WTC11 (cell line): ENCODE measurements at regions of chr2 and their contacts with region 1.

Region 1: DNA sequence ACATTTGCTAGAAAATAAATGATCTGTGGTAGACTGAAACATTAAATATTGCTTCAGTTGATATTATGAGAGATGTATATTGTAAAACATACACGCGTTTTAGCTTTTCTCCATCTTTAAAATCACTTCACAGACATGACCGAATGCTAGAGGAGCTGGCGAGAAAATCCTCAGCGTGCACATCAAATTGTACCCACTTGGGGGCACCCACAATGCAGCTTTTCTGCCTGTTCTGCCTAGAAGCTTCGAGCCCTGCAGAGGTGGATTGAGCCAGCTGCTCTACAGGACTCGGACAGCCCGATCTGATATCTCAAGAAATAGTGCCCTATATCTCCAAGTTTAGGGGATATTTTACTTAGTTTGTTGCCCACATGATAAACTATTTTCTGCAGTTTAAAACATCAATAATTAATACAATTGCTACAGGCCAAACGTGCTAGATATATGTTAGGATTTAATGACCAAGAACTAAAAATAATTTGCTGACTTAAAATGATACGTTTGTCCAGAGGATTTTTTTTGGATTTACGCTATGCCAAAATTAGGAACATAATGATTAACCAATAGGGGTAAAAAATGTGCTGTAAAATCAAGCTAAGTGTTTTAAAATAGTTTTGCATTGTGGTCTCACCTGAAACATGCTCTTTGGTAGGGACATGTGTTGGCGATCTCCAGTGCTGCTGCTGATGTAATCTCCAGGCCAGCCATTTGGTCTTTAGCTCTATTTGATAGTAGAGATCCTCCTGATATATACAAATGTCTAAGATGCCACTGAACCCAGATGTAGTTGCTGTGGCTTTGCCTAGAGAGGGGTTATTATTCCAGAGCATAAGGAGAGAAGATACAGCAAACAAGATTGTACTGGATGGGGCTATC is 22.3 kb upstream of the ATP5MC3 start:
- DNase-seq: peak; percentile 76
- ATAC-seq: peak; percentile 100
- H3K4me3 Mint-ChIP-seq: no peak overlapping the region
- H3K27ac Mint-ChIP-seq: no peak overlapping the region
- H3K4me1 Mint-ChIP-seq: peaks cover 3% of the 10 kb centered on the region; the same call in 1 of the 2 replicates
- H3K27me3 Mint-ChIP-seq: no peaks in the 10 kb centered on the region; the same call in 1 of the 2 replicates
- CTCF ChIP-seq: no peak

Region 2: DNA sequence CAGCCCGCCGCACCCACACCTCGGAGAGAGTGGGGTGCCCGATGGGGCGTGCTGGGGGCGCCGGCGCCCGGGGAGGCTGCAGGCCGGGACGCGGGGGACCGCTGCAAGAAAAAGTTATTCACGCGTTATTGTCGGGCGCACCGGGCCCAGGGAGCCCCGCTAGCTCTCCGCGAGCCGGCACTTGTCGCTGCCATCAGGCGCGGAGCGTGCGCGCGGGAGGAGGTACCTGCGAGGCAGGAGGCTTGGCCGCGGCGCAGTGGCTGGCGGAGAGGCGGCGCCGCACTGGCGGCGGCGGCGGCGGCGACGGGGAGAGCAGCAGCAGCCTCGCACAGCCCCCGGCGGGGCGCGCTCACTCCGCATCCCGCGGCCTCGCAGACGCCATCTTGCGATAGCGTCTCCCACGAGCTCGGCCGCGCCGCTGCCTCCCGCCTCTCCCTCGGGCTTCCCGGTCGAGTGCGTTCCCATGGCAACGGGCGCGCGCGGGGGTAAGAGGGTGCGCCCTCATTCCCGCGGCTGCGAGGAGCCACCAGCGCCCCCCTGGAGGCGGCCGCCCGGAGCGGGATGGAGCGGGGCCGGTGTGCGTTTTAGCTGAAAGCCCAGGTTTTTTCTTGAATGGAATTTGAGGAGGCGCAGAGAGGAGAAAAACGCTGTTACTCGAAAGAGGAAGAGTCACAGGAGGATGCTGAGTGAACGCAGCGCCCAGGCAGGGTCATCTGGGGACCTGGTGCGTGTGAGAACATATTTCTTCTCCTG is 198.7 kb before region 1 on chr2 and contains the start of gene CHN1:
- CTCF ChIA-PET with region 1: no interaction called
- POLR2A ChIA-PET with region 1: no interaction called
- DNase-seq: peak; percentile 81
- ATAC-seq: peak; percentile 79
- H3K4me3 Mint-ChIP-seq: peak within 1 kb of the TSS; percentile 89
- H3K27ac Mint-ChIP-seq: peak within 1 kb of the TSS; percentile 91
- H3K4me1 Mint-ChIP-seq: peaks cover 51% of the 10 kb centered on the region
- H3K27me3 Mint-ChIP-seq: no peaks in the 10 kb centered on the region
- CTCF ChIP-seq: no peak
- total RNA-seq, gene CHN1: 26.1 to 30.0 TPM (median 28.0 TPM) in 3 replicates

Region 3: DNA sequence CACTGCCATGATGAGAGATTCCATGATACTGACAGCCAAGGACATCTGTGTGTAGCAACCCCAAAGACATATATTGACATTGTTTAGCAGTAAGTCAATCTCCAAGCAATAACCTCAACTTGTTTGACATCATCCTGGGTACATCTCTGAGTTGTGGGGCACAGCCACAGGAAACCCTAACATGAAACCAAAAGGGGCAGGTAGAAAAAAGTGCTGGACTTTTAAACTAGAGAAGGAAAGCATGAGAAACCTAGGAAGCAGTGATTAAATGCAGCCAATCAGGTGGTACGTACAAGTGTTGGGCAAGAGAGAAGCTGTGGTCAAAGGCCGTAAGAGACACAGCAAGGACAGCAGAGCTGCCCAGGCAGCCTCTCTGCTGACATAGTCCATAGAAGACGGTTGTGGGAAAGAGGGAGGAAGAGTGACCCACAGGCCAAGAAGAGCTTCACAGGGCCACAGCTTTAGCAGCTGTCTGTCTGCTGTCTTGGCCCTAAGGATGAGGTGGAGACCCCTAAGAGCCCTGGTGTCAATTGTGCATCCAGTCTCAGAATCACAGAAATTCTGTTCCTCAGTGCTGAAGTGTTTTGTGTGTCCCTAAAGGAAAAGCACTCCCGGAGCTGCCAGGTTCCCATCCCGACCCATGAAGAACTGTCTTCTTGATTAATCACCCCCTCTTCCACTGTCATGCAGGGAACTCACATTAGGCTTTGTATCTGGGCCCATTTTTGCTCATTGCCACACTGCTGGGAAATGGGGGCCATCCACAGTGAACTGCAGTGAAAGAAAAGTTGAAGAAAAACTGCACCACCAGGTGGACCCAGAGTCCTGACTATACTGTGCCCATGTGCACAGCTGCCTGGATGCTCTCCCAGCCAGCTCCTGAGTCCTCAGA is 173.2 kb before region 1 on chr2:
- CTCF ChIA-PET with region 1: interaction called, 11 read pairs
- POLR2A ChIA-PET with region 1: no interaction called
- DNase-seq: peak; percentile 61
- ATAC-seq: peak; percentile 99
- H3K4me3 Mint-ChIP-seq: no peak overlapping the region
- H3K27ac Mint-ChIP-seq: no peak overlapping the region
- H3K4me1 Mint-ChIP-seq: peaks cover 13% of the 10 kb centered on the region
- H3K27me3 Mint-ChIP-seq: no peaks in the 10 kb centered on the region
- CTCF ChIP-seq: 0 out of 2 replicates have a peak, but pooled peaks have one; percentile 18

Region 4: DNA sequence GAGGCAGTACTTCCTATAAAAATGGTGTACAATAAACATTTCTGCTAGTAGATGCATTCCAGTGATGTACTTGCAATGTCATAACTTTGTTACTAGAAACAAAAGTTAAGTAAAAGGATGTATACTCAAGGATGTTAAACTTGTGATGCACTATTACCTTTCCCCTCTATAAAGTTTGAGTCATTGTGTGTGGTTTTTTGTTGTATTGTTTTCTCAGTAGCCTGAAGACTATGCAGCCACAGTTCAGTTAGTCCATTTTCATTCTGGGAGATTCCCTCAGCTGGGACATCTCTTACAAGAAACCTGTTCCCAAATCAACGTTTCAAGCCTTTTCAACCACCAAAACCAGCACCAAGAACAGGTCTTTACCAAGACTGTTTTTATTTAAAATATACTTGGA is 28.0 kb before region 1 on chr2:
- CTCF ChIA-PET with region 1: no interaction called
- POLR2A ChIA-PET with region 1: no interaction called
- DNase-seq: no peak
- ATAC-seq: no peak
- H3K4me3 Mint-ChIP-seq: no peak overlapping the region
- H3K27ac Mint-ChIP-seq: no peak overlapping the region
- H3K4me1 Mint-ChIP-seq: peaks cover 6% of the 10 kb centered on the region
- H3K27me3 Mint-ChIP-seq: no peaks in the 10 kb centered on the region
- CTCF ChIP-seq: no peak

Region 5: GRCh38 chr2:175282290-175282689 is 78.4 kb after region 1 on chr2:
- CTCF ChIA-PET with region 1: interaction called, 11 read pairs
- POLR2A ChIA-PET with region 1: no interaction called
- DNase-seq: no peak
- ATAC-seq: peak; percentile 88
- H3K4me3 Mint-ChIP-seq: no peak overlapping the region
- H3K27ac Mint-ChIP-seq: no peak overlapping the region
- H3K4me1 Mint-ChIP-seq: no peaks in the 10 kb centered on the region
- H3K27me3 Mint-ChIP-seq: no peaks in the 10 kb centered on the region; the same call in 1 of the 2 replicates
- CTCF ChIP-seq: 0 out of 2 replicates have a peak, but pooled peaks have one; percentile 32

Region 6: GRCh38 chr2:175326801-175327200 is 122.9 kb after region 1 on chr2:
- CTCF ChIA-PET with region 1: interaction called, 15 read pairs
- POLR2A ChIA-PET with region 1: no interaction called
- DNase-seq: no peak
- ATAC-seq: no peak
- H3K4me3 Mint-ChIP-seq: no peak overlapping the region
- H3K27ac Mint-ChIP-seq: no peak overlapping the region
- H3K4me1 Mint-ChIP-seq: peaks cover 4% of the 10 kb centered on the region
- H3K27me3 Mint-ChIP-seq: 0 out of 2 replicates have a peak, but pooled peaks cover 4% of the 10 kb centered on the region
- CTCF ChIP-seq: no peak